Head of caudate nucleus (tissue), 42 donors: ENCODE measurements at regions of chr13 and their contacts with region 1.

Region 1: DNA sequence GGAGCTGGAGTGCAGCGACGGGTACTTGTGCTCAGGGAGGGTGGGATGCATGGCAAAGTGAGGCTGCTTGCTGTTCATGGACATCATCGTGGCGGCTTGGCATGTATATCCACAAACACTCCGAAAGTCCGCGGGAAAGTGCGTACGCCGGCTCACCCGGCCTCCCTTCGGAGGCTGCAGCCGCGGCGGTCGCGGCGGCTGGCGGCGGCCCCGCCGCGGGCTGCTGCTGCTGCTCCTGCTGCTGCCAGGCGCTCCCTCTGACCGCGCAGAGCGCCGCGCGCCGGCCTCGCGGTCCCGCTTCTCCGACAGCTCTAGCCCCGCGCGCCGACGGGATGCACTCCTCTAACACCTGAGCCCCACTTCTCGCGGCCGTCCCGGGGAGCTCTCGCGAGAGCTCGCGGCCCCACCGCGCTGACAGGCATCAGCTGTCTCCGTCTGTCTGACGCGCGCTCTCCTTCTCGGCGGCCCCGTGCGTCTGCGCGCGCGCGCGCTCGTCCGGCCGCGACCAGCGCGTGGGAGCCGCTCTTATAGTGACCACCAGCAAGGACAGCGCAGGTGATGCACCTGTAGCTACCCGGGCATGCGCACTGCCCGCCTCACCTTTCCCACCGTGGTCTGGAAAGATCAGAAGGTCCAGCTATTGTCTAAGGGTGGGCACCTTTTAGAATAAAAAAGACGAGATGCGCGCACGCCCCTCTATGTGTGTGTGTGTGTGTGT is at the start of gene POU4F1:
- DNase-seq: peak in 1 of 42 donors; percentile 21

Region 2: DNA sequence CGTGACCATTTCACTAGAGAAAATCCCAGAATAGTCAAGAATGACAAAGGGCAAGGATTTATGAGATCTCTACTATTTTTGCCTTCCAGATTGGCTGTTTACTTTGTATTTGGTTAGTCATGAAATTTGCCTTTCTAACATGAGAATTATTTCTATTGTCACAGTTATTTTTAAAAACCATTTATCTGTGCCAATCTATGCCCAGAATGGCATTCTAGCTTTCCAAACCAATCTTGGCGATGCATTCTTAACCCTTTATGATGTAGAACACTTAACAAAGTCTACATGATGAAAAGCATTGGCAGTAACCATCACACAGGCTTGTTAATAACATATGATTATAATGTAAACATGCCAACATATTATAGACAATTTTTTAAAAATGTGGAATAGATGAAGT is 1002.7 kb before region 1 on chr13:
- intact Hi-C with region 1: no loop called
- DNase-seq: no peak

Region 3: DNA sequence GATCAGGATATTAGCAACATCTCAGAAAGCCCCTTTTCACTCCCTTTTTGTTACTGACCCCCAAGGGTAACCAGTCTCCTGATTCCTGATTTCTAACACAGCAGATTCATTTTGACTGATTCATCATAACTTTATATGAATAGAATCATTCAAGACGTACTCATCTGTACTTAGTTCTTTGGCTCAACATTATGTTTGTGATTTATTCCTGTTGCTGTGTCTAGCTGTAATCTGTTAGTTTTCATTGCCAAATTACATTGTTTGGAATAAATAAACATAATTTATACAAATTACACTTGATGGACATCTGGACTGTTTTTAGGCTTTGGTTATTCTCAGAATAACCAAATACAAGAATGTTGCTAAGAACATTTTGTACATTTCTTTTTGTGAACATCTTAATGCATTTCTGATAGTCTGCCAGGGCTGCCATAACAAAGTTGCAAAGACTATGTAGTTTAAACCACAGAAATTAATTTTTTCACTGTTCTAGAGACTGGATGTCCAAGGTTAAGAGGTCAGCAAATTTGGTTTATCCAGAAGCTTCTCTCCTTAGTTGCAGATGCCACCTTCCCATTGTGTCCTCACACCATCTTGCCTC is 622.0 kb before region 1 on chr13:
- intact Hi-C with region 1: no loop called
- DNase-seq: no peak

Region 4: DNA sequence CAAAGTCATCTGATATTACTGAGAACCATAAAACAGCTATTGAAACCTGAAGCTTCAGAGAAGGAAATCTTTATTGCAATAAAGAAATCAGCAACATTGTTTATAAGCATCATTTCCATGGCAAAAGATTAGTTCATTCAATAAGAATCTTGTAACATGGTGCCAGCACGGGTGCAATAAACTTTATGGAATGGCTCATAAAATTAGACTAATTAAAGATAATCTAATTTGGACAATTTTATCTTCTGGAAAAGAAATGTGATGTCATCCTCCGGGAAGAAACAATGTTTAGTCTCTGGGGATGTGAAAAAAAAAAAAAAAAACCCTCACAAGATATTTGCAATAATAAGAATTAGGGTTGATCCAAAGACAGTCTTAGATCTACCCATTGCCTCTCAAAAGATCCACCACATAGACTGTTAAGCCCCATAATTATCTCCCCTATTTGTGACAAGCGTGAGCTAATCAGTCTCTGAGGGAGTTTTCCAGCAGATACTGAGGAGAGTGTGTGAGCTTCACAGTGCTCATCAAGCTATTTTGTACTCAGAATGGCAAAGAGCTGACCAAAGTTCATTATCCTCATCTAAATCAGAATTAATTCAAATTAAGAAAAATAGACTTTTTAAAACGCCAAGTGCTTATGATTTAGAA is 387.8 kb before region 1 on chr13:
- intact Hi-C with region 1: no loop called
- DNase-seq: no peak

Region 5: DNA sequence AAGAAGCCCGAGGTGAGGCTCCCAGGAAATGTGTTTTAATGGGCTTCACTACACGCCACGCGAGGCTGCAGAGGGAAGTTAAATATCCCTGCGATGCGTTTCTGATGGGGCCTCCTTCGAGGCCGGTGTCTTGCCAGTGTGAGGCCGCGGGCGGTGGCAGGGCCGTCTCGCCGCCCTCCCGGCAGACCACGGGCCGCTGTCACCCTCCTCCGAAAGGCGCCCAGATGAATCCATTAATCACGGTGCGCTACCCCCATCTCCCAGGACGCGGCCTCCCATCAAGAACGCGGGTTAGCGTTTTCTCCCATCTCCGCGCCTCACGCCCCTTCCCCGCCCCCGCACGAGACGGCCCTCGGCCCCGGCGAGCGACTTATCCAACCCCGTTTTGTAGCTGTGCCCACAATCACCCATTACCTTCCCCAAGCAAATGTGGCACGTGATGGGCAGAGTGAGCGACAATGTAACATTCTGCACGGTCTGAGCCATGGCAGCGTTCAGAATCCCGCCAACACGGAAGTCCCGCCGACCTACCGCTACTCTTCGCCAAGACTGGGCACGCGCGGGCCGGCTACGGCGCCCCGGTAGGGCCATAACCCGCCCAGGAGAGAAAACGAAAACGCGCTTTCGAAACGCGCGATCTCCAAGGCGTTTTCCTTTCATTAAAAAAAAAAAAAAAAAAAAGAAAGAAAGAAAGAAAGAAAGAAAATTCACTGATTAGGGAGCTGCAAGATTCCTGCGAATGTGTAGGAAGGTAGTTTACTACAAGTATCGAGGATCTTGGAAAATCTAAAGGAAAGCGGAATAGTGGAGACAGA is 55.4 kb after region 1 on chr13 and contains the start of gene OBI1:
- intact Hi-C with region 1: loop called (anchors 10 kb)
- DNase-seq: peak; percentile 79 to 99 (median 96)